ENCODE measurements at regions of chr5 and their contacts with region 1.

Region 1: GRCh38 chr5:68070591-68071281 is 144.8 kb upstream of the PIK3R1 start:
- DNase-seq: no peak
- ATAC-seq: no peak
- H3K4me3 ChIP-seq: no peak overlapping the region
- H3K27ac ChIP-seq: no peak overlapping the region
- H3K4me1 ChIP-seq: peaks cover 9% of the 10 kb centered on the region; the same call in 1 of the 2 replicates
- H3K27me3 ChIP-seq: no peaks in the 10 kb centered on the region; a peak in 1 of 5 replicates
- CTCF ChIP-seq: no peak
- EP300 ChIP-seq: no peak
- POLR2A ChIP-seq: no peak
- RAD21 ChIP-seq: no peak

Region 2: DNA sequence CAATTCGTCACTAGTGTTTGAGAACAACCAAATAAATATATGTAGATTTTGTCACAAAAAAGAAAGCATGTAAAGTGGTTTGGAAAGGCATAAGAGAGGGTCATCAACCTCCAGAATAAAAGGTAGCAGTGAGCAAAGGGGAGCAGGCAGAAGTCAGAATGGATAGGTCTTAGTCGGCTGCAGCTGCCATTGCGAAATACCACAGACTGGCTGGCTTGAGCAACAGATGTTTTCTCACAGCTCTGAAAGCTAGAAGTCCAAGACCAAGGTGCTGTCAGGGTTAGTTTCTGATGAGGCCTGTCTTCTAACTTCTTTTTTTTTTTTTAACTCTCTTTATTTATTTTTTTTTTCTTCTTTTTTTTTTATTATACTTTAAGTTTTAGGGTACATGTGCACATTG is 63.3 kb before region 1 on chr5:
- CTCF ChIA-PET with region 1: no interaction called
- POLR2A ChIA-PET with region 1: no interaction called
- in situ Hi-C with region 1: no loop called
- intact Hi-C with region 1: loop called (anchors 2 kb)
- DNase-seq: peak; percentile 2
- ATAC-seq: peak; percentile 43; the same call in 1 of the 3 replicates
- H3K4me3 ChIP-seq: no peak overlapping the region
- H3K27ac ChIP-seq: no peak overlapping the region
- H3K4me1 ChIP-seq: no peaks in the 10 kb centered on the region
- H3K27me3 ChIP-seq: no peaks in the 10 kb centered on the region
- CTCF ChIP-seq: no peak
- EP300 ChIP-seq: no peak
- POLR2A ChIP-seq: no peak
- RAD21 ChIP-seq: no peak

Region 3: GRCh38 chr5:68331192-68332079 is 260.7 kb after region 1 on chr5:
- CTCF ChIA-PET with region 1: no interaction called
- POLR2A ChIA-PET with region 1: no interaction called
- in situ Hi-C with region 1: no loop called
- intact Hi-C with region 1: no loop called
- DNase-seq: peak; percentile 7
- ATAC-seq: no peak
- H3K4me3 ChIP-seq: no peak overlapping the region
- H3K27ac ChIP-seq: no peak overlapping the region
- H3K4me1 ChIP-seq: no peaks in the 10 kb centered on the region
- H3K27me3 ChIP-seq: peaks cover 1 to 3% of the 10 kb centered on the region in 2 experiments; a peak in 2 of 5 replicates
- CTCF ChIP-seq: no peak
- EP300 ChIP-seq: no peak
- POLR2A ChIP-seq: no peak
- RAD21 ChIP-seq: no peak